Activated CD4-positive, alpha-beta memory T cell treated with anti-CD3 and anti-CD28 coated beads for 36 hours (primary cell): ENCODE measurements at regions of chr3 and their contacts with region 1.

Region 1: GRCh38 chr3:66276705-66277274 is 56.0 kb downstream of the SLC25A26 start:
- DNase-seq: peak; percentile 68
- H3K4me3 Mint-ChIP-seq: no peak overlapping the region
- H3K27ac Mint-ChIP-seq: peak overlapping the region; percentile 24
- H3K4me1 Mint-ChIP-seq: peaks cover 37% of the 10 kb centered on the region
- H3K27me3 Mint-ChIP-seq: no peaks in the 10 kb centered on the region

Region 2: GRCh38 chr3:66372681-66373350 is 96.0 kb after region 1 on chr3:
- CTCF ChIA-PET with region 1: interaction called, 47 read pairs
- POLR2A ChIA-PET with region 1: interaction called, 3 read pairs
- intact Hi-C with region 1: loop called (anchors 1 kb)
- DNase-seq: peak; percentile 67
- H3K4me3 Mint-ChIP-seq: no peak overlapping the region
- H3K27ac Mint-ChIP-seq: no peak overlapping the region
- H3K4me1 Mint-ChIP-seq: peaks cover 3% of the 10 kb centered on the region
- H3K27me3 Mint-ChIP-seq: no peaks in the 10 kb centered on the region

Region 3: GRCh38 chr3:66394019-66394752 is 117.4 kb after region 1 on chr3:
- CTCF ChIA-PET with region 1: interaction called, 22 read pairs
- POLR2A ChIA-PET with region 1: no interaction called
- intact Hi-C with region 1: loop called (anchors 5 kb)
- DNase-seq: peak; percentile 74
- H3K4me3 Mint-ChIP-seq: peak overlapping the region; percentile 73
- H3K27ac Mint-ChIP-seq: peak overlapping the region; percentile 93
- H3K4me1 Mint-ChIP-seq: peaks cover 57% of the 10 kb centered on the region
- H3K27me3 Mint-ChIP-seq: no peaks in the 10 kb centered on the region

Region 4: DNA sequence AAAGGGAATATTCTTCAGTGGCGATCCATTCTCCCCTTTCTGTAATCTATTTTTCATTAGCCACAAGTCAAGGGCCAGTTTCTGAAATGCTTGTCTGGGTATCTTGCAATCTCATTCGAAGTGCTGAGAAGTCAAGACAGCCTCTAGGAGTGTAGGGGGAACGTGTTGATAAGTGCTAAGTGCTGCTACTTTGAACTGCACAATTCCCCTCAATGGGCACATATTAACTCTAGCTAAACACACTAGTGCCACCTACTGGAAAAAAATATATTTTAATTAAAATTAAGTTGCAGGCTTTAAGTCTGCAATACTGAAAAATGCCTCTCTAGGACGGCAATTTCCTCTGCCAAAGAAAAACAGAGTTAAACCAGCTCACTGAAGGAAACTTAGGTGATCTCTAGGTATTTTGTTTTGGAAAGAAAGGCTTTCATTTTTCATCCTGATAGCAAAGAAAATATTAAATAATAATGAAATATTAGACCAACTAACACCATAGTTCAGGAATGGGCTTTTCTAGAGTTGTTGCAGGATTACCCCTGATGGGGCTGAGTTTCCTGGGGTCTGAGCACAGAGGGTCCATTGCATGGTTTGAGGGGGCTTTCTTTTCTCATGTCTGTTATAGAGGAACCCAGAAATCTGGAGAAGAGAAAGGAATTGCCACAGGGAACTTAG is 539.4 kb after region 1 on chr3:
- CTCF ChIA-PET with region 1: interaction called, 32 read pairs
- POLR2A ChIA-PET with region 1: no interaction called
- intact Hi-C with region 1: loop called (anchors 1 kb)
- DNase-seq: no peak
- H3K4me3 Mint-ChIP-seq: no peak overlapping the region
- H3K27ac Mint-ChIP-seq: no peak overlapping the region
- H3K4me1 Mint-ChIP-seq: peaks cover 2% of the 10 kb centered on the region
- H3K27me3 Mint-ChIP-seq: peaks cover 1% of the 10 kb centered on the region

Region 5: GRCh38 chr3:66822186-66823008 is 545.6 kb after region 1 on chr3:
- CTCF ChIA-PET with region 1: interaction called, 32 read pairs
- POLR2A ChIA-PET with region 1: no interaction called
- intact Hi-C with region 1: loop called (anchors 1 kb)
- DNase-seq: peak; percentile 76
- H3K4me3 Mint-ChIP-seq: no peak overlapping the region
- H3K27ac Mint-ChIP-seq: no peak overlapping the region
- H3K4me1 Mint-ChIP-seq: no peaks in the 10 kb centered on the region
- H3K27me3 Mint-ChIP-seq: no peaks in the 10 kb centered on the region

Region 6: DNA sequence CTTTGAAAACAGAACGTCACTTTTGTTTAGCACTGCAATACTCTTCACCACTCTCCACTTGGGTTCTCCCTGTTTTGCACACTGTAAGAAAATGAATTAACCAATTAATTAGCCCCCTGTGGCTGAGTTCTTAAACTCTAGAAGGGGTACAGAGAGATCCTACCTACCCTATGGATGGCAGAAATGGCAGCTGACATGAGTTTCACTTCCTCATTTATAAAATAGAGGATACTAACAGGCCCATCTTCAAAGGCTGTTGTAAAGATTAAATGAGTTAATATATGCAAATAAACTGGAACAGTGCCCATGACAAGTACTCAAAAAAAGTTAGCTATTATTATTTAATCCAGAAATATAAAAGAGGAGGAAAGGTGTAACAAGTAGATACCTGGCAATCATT is 1340.7 kb after region 1 on chr3:
- CTCF ChIA-PET with region 1: no interaction called
- POLR2A ChIA-PET with region 1: no interaction called
- intact Hi-C with region 1: no loop called
- DNase-seq: no peak
- H3K4me3 Mint-ChIP-seq: no peak overlapping the region
- H3K27ac Mint-ChIP-seq: no peak overlapping the region
- H3K4me1 Mint-ChIP-seq: peaks cover 14% of the 10 kb centered on the region
- H3K27me3 Mint-ChIP-seq: no peaks in the 10 kb centered on the region